Thyroid gland (tissue), 4 donors: ENCODE measurements at regions of chr11 and their contacts with region 1.

Region 1: DNA sequence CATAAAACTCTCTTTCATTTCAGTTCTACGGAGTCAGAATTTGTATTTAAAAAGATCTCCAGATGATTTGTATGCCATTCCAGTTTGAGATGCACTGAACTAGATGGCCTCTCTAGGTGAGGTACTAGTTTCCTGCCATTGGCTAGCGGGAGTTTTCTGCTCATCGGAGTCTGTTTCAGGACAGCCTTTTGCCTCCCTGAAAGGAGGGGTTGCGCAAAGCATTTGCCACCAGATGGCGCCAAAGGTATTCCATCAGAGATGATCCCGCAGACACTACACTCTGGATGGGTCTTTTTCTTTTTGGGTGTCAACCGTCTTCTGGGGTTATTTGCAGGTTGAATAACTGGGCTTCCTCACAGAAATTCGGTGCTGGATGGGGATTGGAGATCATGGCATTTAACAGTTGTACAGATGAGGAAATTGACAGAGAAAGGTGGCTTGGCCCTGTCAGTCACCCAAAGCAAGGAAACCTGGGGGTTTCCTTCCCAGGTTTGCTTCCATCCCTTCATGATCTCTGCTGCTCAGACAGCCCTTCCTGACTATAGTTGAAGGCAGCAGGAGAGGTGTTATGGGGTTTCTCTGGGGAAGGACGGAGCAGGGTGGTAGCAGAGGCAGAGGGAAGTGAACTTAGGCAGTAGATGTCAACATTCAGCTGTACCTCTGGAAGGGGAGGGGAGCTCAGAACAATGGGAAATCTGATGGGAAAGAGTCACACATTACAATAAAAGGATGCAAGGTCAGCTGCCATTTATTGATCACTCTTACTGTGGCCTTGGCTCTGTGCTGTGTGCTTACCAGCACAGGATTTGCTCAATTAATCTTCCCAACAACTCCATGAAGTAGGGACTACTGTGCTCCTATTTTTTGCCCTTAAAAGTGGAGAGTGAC is 81.6 kb downstream of the CCDC81 start:
- DNase-seq: peak; percentile 84 to 89
- H3K4me3 ChIP-seq: no peak overlapping the region
- H3K27ac ChIP-seq: no peak overlapping the region
- H3K4me1 ChIP-seq: peaks cover 11 to 39% of the 10 kb centered on the region in 2 donors
- H3K27me3 ChIP-seq: no peaks in the 10 kb centered on the region
- CTCF ChIP-seq: peak; percentile 73 to 88 (median 86)
- POLR2A ChIP-seq: no peak

Region 2: DNA sequence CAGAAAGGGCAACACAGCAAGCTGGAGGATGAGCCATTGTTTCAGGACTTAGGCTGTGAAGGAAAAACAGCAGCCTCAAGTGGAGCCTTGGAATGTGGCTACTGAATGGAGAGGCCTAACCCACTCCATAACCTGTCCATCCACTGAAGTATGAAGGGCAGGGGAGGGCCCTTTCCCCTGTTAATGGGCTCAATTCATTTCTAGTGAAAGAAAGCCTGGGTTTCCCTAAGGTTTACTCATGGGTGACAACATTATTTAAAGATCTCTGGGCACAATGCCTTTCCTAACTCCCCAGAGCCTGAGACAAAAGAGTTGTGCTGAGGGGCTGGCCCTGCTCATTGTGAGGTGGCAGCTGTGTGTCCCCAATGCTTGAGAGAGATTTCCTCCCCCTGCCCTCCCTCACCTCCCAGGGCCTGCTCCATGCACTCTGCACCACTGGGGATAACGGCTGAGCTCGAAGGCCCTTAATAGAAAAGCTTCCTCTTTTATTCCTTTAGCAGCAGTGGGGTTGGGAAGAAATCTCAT is 132.3 kb after region 1 on chr11:
- intact Hi-C with region 1: loop called (anchors 10 kb)
- DNase-seq: peak; percentile 81 to 83
- H3K4me3 ChIP-seq: no peak overlapping the region
- H3K27ac ChIP-seq: peak overlapping the region; percentile 51 to 78 (median 69)
- H3K4me1 ChIP-seq: peaks cover 30 to 52% of the 10 kb centered on the region in 2 donors
- H3K27me3 ChIP-seq: no peaks in the 10 kb centered on the region
- CTCF ChIP-seq: peak in 1 of 6 experiments; percentile 27
- POLR2A ChIP-seq: no peak

Region 3: GRCh38 chr11:86608251-86608799 is 152.0 kb after region 1 on chr11:
- intact Hi-C with region 1: loop called (anchors 5 kb)
- DNase-seq: peak; percentile 68 to 78
- H3K4me3 ChIP-seq: no peak overlapping the region
- H3K27ac ChIP-seq: peak overlapping the region in 1 of 3 donors; percentile 27
- H3K4me1 ChIP-seq: peaks cover 9 to 24% of the 10 kb centered on the region in 2 donors
- H3K27me3 ChIP-seq: no peaks in the 10 kb centered on the region
- CTCF ChIP-seq: peak; percentile 60 to 98 (median 90)
- POLR2A ChIP-seq: no peak

Region 4: DNA sequence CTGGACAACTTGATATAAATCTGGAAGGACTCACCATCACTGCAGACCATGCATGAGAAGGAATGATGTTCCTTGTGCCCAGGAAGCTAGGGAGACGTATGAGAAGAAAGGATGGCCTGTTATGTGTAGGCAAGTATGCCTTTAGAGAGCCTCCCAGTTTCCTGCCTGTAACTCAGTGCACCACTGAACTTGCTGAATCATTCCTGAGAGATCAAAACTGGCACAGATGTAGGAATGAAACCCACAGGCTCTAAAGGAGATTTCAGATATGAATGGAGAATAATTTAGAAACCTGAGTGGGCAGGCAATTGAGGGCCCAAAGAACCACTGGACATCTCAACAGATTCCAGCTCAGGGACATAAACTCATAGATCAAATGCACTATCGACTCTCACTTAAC is 305.7 kb after region 1 on chr11:
- intact Hi-C with region 1: no loop called
- DNase-seq: no peak
- H3K4me3 ChIP-seq: no peak overlapping the region
- H3K27ac ChIP-seq: no peak overlapping the region
- H3K4me1 ChIP-seq: no peaks in the 10 kb centered on the region
- H3K27me3 ChIP-seq: no peaks in the 10 kb centered on the region
- CTCF ChIP-seq: no peak
- POLR2A ChIP-seq: no peak

Region 5: DNA sequence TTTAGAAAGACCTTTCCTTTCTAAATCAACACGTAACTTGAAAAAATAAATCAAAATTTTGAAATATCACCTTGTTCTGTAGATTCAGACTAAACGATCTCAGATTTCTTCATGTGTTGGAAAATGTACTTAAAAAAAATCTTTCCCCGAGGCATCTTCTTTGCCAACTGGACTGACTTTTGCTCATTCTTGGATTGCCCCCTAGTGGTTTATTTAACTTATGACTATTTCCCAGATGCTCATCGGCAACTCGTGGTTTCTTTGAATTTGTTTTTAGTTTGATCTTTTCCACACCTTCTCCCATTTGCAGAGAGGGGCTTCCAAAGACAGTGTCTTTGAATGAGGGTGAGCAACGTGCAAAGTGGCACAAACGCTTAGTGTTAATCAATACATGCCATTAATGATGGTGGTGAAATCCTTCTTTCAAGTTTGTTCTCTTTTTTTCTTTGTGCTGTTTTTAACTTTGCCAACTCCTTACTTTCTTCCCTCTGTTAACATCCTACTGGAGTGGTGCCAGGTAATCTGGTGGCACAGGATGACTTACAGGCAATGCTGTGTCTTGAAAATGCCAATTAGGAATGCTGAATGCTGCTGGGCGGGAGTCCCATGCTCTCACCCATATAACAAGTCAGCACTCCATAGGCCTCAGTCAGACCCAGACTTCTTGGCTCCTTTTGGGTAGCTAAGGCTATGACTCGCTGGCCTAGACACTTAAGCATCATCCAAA is 362.3 kb after region 1 on chr11:
- intact Hi-C with region 1: loop called (anchors 5 kb)
- DNase-seq: peak in 1 of 2 donors; percentile 9
- H3K4me3 ChIP-seq: no peak overlapping the region
- H3K27ac ChIP-seq: no peak overlapping the region
- H3K4me1 ChIP-seq: peaks cover 0 to 7% of the 10 kb centered on the region in 2 donors
- H3K27me3 ChIP-seq: no peaks in the 10 kb centered on the region
- CTCF ChIP-seq: peak; percentile 34 to 89 (median 74)
- POLR2A ChIP-seq: no peak